Dendritic cell treated with granulocyte-macrophage colony-stimulating factor and Interleukin-4, amounts not matched to agents 40 ng/mL and 50 ng/mL, for 4 days (primary cell): ENCODE measurements at regions of chr1 and their contacts with region 1.

Region 1: GRCh38 chr1:180080433-180080832 is 74.2 kb upstream of the QSOX1 start:
- H3K4me3 Mint-ChIP-seq: no peak overlapping the region
- H3K27ac Mint-ChIP-seq: no peak overlapping the region
- H3K4me1 Mint-ChIP-seq: no peaks in the 10 kb centered on the region
- H3K27me3 Mint-ChIP-seq: no peaks in the 10 kb centered on the region

Region 2: GRCh38 chr1:179917601-179918429 is 162.6 kb before region 1 on chr1:
- intact Hi-C with region 1: loop called (anchors 10 kb)
- H3K4me3 Mint-ChIP-seq: no peak overlapping the region
- H3K27ac Mint-ChIP-seq: no peak overlapping the region
- H3K4me1 Mint-ChIP-seq: peaks cover 6% of the 10 kb centered on the region
- H3K27me3 Mint-ChIP-seq: no peaks in the 10 kb centered on the region

Region 3: DNA sequence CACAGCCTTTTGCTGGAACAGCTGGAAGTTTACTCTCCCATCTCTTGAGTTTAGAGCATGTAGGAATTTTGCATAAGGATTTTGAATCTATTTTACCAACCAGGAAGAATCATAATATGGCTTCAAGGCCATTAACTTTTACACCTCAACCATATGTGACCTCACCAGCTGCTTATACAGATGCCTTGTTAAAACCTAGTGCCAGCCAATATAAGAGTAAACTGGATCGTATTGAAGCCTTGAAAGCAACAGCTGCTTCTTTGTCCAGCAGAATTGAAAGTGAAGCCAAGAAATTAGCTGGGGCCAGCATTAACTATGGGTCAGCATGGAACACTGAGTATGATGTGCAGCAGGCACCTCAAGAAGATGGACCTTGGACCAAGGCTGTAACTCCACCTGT is 60.4 kb before region 1 on chr1:
- intact Hi-C with region 1: loop called (anchors 10 kb)
- H3K4me3 Mint-ChIP-seq: no peak overlapping the region
- H3K27ac Mint-ChIP-seq: no peak overlapping the region
- H3K4me1 Mint-ChIP-seq: no peaks in the 10 kb centered on the region
- H3K27me3 Mint-ChIP-seq: no peaks in the 10 kb centered on the region

Region 4: DNA sequence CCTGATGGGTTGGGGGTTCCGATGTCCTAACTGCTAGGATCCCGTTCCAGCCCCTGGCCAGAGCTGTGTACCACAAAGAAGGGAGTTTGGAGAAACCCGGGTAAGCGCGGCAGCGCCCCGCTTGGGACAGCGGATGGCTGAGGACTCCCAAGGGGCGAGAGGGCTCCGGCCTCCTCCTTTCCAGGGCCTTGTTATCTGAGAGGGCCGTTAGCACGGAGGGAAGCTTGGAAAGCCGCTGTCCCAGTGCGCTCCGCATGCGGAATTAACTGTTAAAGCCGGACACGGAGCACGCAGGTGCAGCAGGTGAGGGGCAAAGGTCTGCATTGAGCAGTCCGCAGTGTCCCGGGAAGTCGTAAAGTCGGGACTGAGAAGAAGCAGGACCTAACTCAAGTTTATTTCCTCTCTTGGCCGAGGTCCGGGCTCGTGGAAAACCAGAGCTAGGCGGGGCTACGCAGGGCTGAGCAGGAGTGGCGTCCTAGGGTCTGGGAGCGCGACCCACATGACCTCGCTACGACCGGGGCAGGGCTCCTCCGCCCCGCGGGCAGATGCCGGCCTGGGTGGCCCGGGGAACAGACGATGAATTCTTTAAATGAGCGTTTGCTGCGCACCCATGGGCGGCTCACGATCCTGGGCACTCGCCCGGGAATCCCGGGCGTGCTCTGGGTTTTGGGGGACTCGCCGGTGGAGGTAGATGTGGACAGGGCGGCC is 154.1 kb after region 1 on chr1:
- intact Hi-C with region 1: no loop called
- H3K4me3 Mint-ChIP-seq: peak overlapping the region; percentile 49
- H3K27ac Mint-ChIP-seq: no peak overlapping the region
- H3K4me1 Mint-ChIP-seq: peaks cover 63% of the 10 kb centered on the region
- H3K27me3 Mint-ChIP-seq: peaks cover 92% of the 10 kb centered on the region